Right cardiac atrium (tissue), 5 donors: ENCODE measurements at regions of chr17 and their contacts with region 1.

Region 1: DNA sequence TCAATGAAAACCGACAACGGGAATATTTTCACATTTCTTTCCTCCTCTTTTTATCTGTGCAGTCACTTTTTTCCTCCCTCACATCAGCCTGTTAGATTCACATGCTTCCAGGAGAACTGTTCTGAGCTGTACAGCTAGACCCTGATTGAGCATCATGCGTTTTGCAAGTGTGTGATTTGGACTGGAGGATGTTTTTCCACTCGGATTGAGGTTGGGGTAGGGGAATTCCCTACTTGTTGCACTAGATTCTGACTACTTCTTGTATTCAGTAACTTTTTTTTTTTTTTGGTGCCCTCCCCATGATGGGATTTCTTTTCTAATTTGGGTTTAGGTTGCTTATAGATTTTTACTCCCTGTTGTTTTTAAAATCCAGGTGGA is 4.8 kb downstream of the MSI2 start:
- DNase-seq: no peak
- ATAC-seq: no peak
- H3K4me3 ChIP-seq: no peak overlapping the region
- H3K27ac ChIP-seq: no peak overlapping the region
- H3K4me1 ChIP-seq: peaks cover 2% of the 10 kb centered on the region
- H3K27me3 ChIP-seq: no peaks in the 10 kb centered on the region

Region 2: DNA sequence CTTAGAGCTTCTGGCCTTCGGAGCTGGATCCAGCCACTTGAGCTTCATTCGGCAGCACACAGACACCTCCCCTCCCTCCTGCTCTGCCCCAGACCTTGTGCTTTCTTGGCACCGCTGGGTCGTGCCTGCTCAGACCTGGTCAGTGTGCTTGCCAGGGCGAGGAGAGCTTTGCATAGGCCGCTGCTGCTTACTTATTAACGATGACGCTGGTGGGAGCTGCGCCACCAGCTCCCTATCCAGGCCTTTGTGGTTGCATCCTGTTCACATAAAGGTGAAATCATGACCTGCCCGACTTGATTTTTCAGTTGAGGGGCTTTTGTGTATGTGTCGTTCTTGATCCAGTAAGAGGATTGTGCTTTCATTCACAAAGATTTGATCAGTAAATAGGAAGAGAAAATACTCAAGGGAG is 96.3 kb after region 1 on chr17:
- intact Hi-C with region 1: loop called in 1 of 4 experiments (anchors 10 kb)
- DNase-seq: peak in 2 of 3 donors; percentile 47 to 79
- ATAC-seq: peak; percentile 62 to 71
- H3K4me3 ChIP-seq: no peak overlapping the region
- H3K27ac ChIP-seq: no peak overlapping the region
- H3K4me1 ChIP-seq: peaks cover 16% of the 10 kb centered on the region
- H3K27me3 ChIP-seq: no peaks in the 10 kb centered on the region

Region 3: DNA sequence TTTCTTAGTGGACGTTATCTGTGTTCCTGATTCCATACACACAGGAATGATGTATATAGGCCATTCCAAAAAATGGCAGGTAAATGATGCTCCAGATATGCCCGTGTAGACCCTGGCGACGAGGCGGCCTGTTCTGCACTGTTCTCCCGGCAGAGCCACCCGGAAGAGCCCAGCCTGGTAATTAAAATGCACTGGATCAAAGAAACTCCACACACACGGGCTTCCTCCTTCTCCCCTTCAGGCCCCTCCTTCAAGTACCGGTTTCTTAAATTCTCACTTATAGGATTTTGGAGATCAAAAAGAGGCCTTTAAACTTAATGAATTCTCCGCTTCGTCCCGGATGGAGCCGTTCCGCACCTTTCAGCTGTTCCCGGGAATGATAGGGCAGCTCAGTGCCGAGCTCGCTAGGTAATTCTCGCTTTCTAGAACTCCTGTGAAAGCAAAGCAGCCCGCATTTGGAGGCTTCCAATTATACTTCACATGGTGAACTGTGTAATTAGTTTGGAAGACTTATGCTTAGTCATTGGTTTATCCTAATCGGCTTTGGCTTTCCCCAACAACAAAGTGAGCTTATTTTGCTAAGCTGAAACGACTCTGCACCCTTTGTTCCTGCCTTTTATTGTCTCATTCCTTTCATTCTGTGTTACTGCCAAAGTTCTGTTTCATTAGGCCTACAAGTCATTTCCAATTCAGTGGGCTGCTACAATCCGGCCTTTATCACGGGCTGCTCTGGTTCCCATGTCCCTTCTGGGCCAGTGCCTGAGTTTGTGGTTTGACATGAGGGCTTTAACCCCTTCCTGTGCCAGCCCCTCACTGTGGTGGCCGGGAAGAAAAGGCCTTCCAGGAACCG is 145.3 kb after region 1 on chr17:
- intact Hi-C with region 1: no loop called
- DNase-seq: peak; percentile 45 to 74 (median 60)
- ATAC-seq: peak; percentile 56 to 60
- H3K4me3 ChIP-seq: no peak overlapping the region
- H3K27ac ChIP-seq: peak overlapping the region; percentile 30
- H3K4me1 ChIP-seq: peaks cover 19% of the 10 kb centered on the region
- H3K27me3 ChIP-seq: no peaks in the 10 kb centered on the region

Region 4: DNA sequence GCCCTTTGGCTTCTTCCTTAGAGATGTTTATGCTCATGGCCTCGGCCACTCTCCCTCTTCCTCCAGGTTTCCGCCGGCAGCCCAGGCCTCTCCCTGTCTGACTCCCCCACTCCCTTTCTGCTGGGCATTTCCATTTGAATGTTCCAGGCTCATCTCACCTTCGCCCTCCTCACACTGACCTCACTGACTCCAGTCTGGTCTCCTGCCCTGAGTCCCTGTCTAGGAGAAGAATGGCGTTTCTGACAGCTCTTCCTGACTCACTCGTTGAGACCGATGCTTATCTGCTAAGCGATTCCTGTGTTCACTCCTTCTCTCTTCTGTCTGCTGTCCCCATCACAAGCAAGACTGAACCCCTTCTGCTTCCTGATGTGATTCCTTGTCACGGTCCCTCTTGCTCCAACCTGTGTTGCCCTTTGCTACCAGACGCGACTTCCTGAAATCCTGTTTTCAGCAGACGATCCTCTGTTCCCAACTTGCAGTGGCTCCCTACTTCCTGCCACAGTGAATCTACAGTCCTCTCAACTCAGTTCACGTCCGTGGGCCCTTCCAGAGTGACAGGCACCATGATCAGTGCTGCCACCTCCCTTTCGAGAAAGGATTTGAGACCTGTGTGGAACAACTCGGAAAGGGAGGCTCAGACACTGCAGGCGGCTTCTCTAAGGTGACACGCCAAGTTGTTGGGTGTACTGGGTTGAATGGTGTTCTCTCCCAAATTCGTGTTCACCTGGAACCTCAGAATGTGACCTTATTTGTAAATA is 171.6 kb after region 1 on chr17:
- intact Hi-C with region 1: no loop called
- DNase-seq: no peak
- ATAC-seq: peak; percentile 13 to 52
- H3K4me3 ChIP-seq: no peak overlapping the region
- H3K27ac ChIP-seq: no peak overlapping the region
- H3K4me1 ChIP-seq: peaks cover 5% of the 10 kb centered on the region
- H3K27me3 ChIP-seq: no peaks in the 10 kb centered on the region

Region 5: GRCh38 chr17:57455063-57455914 is 194.2 kb after region 1 on chr17:
- intact Hi-C with region 1: loop called in 1 of 4 experiments (anchors 10 kb)
- DNase-seq: peak in 1 of 3 donors; percentile 34
- ATAC-seq: peak; percentile 29 to 54
- H3K4me3 ChIP-seq: no peak overlapping the region
- H3K27ac ChIP-seq: no peak overlapping the region
- H3K4me1 ChIP-seq: peaks cover 4% of the 10 kb centered on the region
- H3K27me3 ChIP-seq: no peaks in the 10 kb centered on the region